Activated T-helper 2 cell treated with anti-CD3 and anti-CD28 coated beads, Interferon-gamma antibody, Interleukin-2, Interleukin-4, amounts not matched to agents 10 μg/mL and 5 μg/mL and 100 μg/mL, durations not matched to agents 14 hours and 24 hours and 36 hours (primary cell): ENCODE measurements at regions of chrX and their contacts with region 1.

Region 1: DNA sequence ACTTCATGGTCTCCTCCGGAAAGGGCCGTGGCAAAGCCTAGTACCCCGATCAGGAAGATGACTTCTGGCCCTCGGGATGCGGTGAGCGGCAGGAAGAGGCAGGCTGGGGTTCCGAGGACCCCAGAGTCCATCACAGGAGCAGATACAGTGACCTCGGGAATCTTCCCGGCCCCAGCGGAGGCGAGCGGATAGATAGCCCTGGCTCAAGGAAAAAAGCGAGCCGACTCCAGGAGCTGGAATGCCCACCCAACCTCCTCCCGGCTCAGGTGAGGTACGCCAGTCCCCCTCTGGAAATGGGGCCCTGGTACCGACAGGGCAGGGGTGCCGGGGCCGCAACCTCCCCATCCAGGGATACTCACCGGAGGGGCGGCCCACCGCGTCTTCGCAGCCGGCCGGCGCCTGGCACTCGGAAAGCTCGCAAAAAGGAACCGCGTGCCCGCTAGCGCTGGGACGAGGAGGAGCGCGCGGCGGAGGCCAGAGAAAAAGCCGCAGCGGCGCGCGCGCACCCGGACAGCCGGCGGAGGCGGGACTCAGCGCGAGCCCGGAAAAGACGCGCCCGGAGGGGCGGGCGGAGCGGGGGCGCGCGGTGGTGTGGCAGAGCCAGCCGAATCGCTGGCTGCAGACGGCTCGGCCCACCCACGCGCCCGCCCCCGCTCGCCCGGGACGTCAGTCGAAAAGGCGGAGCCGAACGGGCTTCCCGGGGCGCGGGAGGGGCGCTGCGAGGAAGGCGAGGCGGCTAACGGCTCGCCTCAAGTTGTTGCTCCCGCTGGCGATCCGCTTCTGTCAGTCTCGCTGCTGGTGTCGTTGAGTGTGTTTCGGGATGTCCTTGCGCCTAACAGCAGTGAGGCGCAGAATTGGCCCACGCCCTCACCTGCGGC is at the start of gene ACSL4:
- DNase-seq: peak; percentile 78
- H3K4me3 Mint-ChIP-seq: peak within 1 kb of the TSS; percentile 93
- H3K27ac Mint-ChIP-seq: peak within 1 kb of the TSS; percentile 95
- H3K4me1 Mint-ChIP-seq: peaks cover 29% of the 10 kb centered on the region
- H3K27me3 Mint-ChIP-seq: no peaks in the 10 kb centered on the region
- total RNA-seq, gene ACSL4: 101 and 102 TPM in 2 replicates

Region 2: GRCh38 chrX:109782994-109783700 is 50.1 kb after region 1 on chrX:
- intact Hi-C with region 1: loop called (anchors 1 kb)
- DNase-seq: no peak
- H3K4me3 Mint-ChIP-seq: peak overlapping the region; percentile 79
- H3K27ac Mint-ChIP-seq: peak overlapping the region; percentile 98
- H3K4me1 Mint-ChIP-seq: peaks cover 39% of the 10 kb centered on the region
- H3K27me3 Mint-ChIP-seq: no peaks in the 10 kb centered on the region

Region 3: GRCh38 chrX:110002300-110003166 is 269.5 kb after region 1 on chrX and contains the start of gene TMEM164:
- intact Hi-C with region 1: loop called (anchors 10 kb)
- DNase-seq: peak; percentile 76
- H3K4me3 Mint-ChIP-seq: peak within 1 kb of the TSS; percentile 93
- H3K27ac Mint-ChIP-seq: peak within 1 kb of the TSS; percentile 94
- H3K4me1 Mint-ChIP-seq: peaks cover 24% of the 10 kb centered on the region
- H3K27me3 Mint-ChIP-seq: no peaks in the 10 kb centered on the region
- total RNA-seq, gene TMEM164: 19.5 and 20.0 TPM in 2 replicates